ENCODE measurements at regions of chr16 and their contacts with region 1.

Region 1: GRCh38 chr16:9251026-9251425 is 159.6 kb downstream of the HAPSTR1 start:
- DNase-seq: no peak
- H3K4me3 ChIP-seq: no peak overlapping the region
- H3K27ac ChIP-seq: no peak overlapping the region
- H3K4me1 ChIP-seq: no peaks in the 10 kb centered on the region
- H3K27me3 ChIP-seq: peaks cover 0 to under 1% of the 10 kb centered on the region in 2 donors
- CTCF ChIP-seq: no peak
- POLR2A ChIP-seq: no peak

Region 2: GRCh38 chr16:8828541-8829165 is 422.4 kb before region 1 on chr16:
- intact Hi-C with region 1: loop called (anchors 5 kb)
- DNase-seq: no peak
- H3K4me3 ChIP-seq: no peak overlapping the region
- H3K27ac ChIP-seq: no peak overlapping the region
- H3K4me1 ChIP-seq: no peaks in the 10 kb centered on the region
- H3K27me3 ChIP-seq: no peaks in the 10 kb centered on the region
- CTCF ChIP-seq: no peak
- POLR2A ChIP-seq: no peak